ENCODE measurements at regions of chr1 and their contacts with region 1.

Region 1: GRCh38 chr1:68116643-68117235 is 66.3 kb upstream of the DIRAS3 start:
- DNase-seq: peak in 37 of 42 donors; percentile 28 to 88 (median 70)

Region 2: GRCh38 chr1:67766141-67766978 is 350.4 kb before region 1 on chr1:
- intact Hi-C with region 1: loop called (anchors 5 kb)
- DNase-seq: peak in 37 of 42 donors; percentile 19 to 77 (median 45)

Region 3: GRCh38 chr1:67780637-67781036 is 336.1 kb before region 1 on chr1:
- intact Hi-C with region 1: no loop called
- DNase-seq: no peak

Region 4: GRCh38 chr1:67853704-67854103 is 263.0 kb before region 1 on chr1:
- intact Hi-C with region 1: loop called (anchors 5 kb)
- DNase-seq: peak in 39 of 42 donors; percentile 26 to 79 (median 58)

Region 5: DNA sequence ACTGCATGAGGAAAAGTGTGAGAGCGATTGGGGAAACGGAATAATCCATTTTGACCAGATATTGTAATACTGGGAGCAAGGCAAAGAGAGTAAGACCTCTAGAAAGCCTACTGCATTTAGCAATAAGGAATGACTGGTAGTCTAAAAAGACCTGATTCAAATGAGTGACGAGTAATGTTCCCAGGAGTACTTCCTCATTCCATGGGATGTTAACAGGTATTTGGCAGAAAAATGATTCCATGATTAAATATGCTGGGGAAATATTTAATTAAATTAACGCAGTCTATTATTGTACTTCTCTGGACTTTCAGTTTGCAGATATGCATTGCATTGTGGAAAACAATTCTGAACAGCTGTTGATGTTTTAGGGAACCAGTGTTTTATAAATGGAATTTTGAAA is 227.5 kb after region 1 on chr1:
- intact Hi-C with region 1: loop called (anchors 2 kb)
- DNase-seq: no peak

Measured in head of caudate nucleus (tissue), 42 donors.